ENCODE measurements at regions of chr7 and their contacts with region 1.

Region 1: GRCh38 chr7:25851332-25852210 is 300.4 kb upstream of the NFE2L3 start:
- DNase-seq: no peak
- H3K4me3 ChIP-seq: peak overlapping the region; percentile 9 to 19
- H3K27ac ChIP-seq: peak overlapping the region; percentile 46
- H3K4me1 ChIP-seq: peaks cover 52% of the 10 kb centered on the region
- H3K27me3 ChIP-seq: peaks cover 8% of the 10 kb centered on the region
- CTCF ChIP-seq: peak; percentile 55 to 80 (median 72)
- POLR2A ChIP-seq: no peak

Region 2: DNA sequence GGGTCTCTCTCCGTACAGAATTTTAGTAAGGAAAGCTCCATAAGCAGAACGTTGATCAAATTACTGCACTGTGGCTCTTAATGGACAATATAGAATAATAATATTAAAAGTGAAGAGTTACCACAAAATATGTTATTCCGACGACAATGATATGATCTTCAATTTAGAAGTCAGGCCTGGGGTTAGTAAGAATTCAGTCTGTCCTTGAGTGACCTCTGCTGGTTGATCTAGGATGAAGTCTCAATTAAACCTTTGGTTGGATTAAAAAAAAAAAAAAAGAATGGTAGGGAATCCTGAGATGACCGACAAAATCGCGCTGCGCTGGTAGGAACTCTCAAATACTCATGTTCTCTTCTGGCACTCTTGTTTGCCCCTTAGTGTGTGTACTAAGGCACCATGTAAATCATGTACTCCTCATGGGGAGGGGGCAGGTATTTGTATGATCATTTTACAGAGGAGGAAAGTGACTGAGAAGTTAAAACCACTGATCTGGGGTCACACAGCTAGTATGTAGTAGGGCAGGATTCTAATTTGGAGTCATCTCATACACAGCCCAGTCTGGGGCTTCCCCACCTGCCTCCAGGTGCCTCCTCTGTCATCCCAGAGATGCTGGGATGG is 462.0 kb before region 1 on chr7:
- intact Hi-C with region 1: loop called (anchors 5 kb)
- DNase-seq: no peak
- H3K4me3 ChIP-seq: no peak overlapping the region
- H3K27ac ChIP-seq: no peak overlapping the region
- H3K4me1 ChIP-seq: peaks cover 21% of the 10 kb centered on the region
- H3K27me3 ChIP-seq: no peaks in the 10 kb centered on the region
- CTCF ChIP-seq: peak in 1 of 3 experiments; percentile 46
- POLR2A ChIP-seq: no peak

Region 3: DNA sequence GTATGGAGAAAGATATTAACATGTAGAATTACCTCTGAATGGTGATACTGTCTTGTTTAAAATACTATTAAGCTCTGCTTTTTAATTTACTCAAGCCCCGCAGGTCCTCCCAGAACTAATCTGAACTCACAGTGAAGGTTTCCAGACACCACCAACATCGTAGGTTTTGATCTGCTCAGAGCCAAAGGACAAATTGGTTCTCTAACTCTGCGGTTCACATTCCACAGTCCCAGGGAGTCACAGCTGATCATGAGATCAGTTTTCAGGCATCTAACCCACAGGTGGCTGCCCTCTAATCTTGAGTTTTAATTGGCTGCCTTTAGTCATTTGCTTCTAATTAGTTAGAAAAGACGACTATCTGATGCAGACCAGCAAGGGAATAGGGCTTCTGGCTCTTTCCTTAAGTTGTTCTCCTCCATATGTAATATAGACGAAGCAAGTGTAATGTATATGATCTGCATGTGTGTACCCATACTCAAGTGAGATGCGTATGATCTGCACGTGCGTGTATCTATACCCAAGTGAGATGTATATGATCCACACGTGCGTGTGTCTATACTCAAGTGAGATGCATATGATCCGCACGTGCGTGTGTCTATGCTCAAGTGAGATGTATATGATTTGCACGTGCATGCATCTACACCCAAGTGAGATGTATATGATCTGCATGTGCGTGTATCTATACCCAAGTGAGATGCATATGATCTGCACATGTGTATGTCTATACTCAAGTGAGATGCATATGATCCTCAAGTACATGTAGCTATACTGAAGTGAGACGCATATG is 291.8 kb before region 1 on chr7:
- intact Hi-C with region 1: loop called (anchors 5 kb)
- DNase-seq: no peak
- H3K4me3 ChIP-seq: no peak overlapping the region
- H3K27ac ChIP-seq: no peak overlapping the region
- H3K4me1 ChIP-seq: no peaks in the 10 kb centered on the region
- H3K27me3 ChIP-seq: no peaks in the 10 kb centered on the region
- CTCF ChIP-seq: no peak
- POLR2A ChIP-seq: no peak

Region 4: GRCh38 chr7:25731068-25731845 is 120.3 kb before region 1 on chr7:
- intact Hi-C with region 1: loop called (anchors 10 kb)
- DNase-seq: no peak
- H3K4me3 ChIP-seq: no peak overlapping the region
- H3K27ac ChIP-seq: no peak overlapping the region
- H3K4me1 ChIP-seq: peaks cover 21% of the 10 kb centered on the region
- H3K27me3 ChIP-seq: no peaks in the 10 kb centered on the region
- CTCF ChIP-seq: no peak
- POLR2A ChIP-seq: no peak

Region 5: DNA sequence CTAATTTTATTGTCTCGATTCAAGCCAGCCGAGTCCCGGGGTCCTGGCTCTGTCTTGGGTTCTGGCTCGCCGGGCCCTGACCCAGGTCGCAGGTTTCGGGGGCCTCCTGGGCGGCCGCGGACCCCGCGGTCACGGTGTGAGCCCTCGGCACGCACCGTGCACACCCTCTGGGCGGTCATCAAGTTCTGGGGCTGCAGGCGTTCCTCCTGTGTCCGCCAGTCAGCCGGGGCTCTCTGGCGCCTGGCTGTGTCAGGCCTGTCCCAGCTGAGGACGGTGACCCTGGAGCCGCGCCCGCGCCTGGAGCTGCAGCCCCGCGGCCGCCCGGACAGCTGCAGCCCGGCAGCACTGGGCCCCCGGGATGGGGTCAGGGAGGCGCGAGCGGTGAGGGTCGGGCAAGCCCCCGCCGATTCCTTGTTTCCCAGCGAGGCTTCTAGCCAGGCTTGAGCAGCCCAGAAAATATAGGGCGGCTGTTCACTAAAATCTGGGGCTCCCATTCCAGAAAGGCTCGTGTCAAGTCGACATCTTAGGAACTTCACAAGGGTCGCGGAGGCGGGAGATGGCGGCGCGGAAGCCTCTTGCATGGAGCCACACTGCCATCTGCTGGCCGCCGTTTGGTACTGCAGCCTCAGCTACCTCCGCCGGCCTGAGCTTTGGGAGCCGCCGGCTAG is 1309.1 kb after region 1 on chr7:
- intact Hi-C with region 1: loop called (anchors 10 kb)
- DNase-seq: no peak
- H3K4me3 ChIP-seq: peak overlapping the region; percentile 55 to 64
- H3K27ac ChIP-seq: peak overlapping the region; percentile 75
- H3K4me1 ChIP-seq: peaks cover 42% of the 10 kb centered on the region
- H3K27me3 ChIP-seq: no peaks in the 10 kb centered on the region
- CTCF ChIP-seq: peak; percentile 98 to 100 (median 99)
- POLR2A ChIP-seq: no peak